ENCODE measurements at regions of chr1 and their contacts with region 1.

Region 1: DNA sequence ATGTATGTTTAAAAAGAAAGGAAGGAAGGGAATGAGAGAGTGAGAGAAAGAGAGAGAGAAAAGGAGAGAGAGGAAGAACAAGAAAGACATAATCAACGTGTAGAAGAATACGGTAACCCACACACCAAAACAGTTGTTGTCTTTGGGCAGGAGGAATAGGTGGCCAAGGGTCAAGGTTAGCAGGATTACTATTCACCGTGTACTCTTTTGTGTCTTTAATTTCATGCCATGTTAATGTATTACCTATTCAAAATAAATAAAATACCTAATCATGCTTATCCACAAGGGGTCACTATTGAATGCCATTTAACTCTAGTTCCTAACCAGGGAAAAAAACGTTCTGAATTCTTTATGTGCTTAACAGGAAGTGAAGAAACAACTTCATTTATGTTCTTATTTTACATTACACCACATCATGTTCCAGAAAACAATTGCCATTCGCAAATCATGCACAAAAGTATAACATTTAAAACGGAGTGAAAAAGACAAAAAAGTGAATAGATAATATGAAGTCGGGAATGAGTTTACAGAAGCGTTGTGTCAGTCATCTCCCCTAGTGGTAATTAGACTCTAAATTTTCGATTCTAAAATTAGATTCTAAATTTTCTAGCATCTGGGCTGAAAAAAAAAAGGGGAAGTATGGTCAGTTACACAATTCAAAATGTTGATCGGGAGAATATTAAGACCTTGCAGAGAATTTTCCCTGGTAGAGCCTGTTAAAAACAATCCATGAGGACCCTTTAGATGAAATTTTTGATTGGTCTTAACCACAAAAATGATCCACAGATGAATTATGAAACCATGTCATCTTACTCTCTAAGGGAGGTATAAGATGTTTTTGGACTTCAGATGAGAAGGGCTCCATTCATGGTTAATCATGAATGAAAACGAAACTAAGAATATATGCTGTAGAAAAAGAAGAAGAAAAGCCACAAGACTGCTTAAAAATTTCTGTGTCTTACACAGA is 700 bp upstream of the KMO start:
- DNase-seq: peak; percentile 77 to 92 (median 83)
- H3K4me3 ChIP-seq: peak overlapping the region; percentile 65 to 100 (median 87)
- H3K4me3 Mint-ChIP-seq: peak overlapping the region; percentile 64 to 97
- H3K27ac ChIP-seq: peak overlapping the region; percentile 74 to 98
- H3K27ac Mint-ChIP-seq: peak overlapping the region; percentile 90 to 98 (median 95)
- H3K4me1 ChIP-seq: peaks cover 24 to 28% of the 10 kb centered on the region in 2 donors
- H3K4me1 Mint-ChIP-seq: peaks cover 29% of the 10 kb centered on the region
- H3K27me3 ChIP-seq: no peaks in the 10 kb centered on the region
- H3K27me3 Mint-ChIP-seq: peaks cover 0 to 2% (median 2%) of the 10 kb centered on the region in 3 donors
- CTCF ChIP-seq: peak; percentile 85

Region 2: DNA sequence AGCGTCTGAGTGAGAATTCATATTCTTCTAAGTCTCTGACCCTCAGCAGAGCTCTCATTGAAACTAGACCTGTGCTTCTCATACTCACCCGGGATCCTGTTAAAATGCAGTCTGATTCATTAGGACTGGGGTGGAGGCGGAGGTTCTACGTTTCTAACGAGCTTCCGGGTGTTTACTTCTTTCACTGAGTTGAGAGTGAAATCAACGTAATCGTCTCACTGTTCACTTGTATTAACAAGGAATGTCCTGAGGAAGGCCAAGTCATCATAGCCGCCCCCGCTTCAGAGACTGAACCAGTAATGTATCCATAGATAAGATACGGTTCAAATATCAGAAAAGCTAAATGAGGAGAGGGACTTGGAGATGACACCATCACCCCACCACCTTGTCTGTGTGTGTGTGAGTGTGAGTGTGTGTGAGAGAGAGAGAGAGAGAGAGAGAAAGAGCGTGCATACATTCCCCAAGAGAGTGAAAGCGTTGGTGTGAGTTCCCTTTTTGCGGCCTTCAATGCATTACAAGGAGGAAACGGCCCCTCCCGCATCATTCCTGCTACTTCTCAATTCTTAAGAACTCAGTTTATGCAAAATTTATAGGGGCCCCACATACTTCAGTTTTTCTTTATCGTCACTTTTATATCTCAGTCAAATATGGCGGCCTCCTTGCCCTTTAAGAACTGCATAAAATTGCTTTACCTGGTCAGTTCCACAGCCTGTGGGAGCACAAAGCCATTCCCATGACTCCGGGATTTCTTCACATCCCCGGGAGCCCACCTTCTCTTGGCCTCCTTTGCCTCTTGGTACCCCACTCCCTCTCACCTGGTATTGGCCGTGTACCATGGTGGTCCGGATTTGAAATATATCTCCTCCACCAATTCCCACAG is 20.5 kb after region 1 on chr1:
- intact Hi-C with region 1: loop called (anchors 2 kb)
- DNase-seq: peak; percentile 93 to 96 (median 95)
- H3K4me3 ChIP-seq: peak overlapping the region; percentile 55 to 90 (median 76)
- H3K4me3 Mint-ChIP-seq: peak overlapping the region; percentile 84 to 94
- H3K27ac ChIP-seq: peak overlapping the region; percentile 80 to 100
- H3K27ac Mint-ChIP-seq: peak overlapping the region; percentile 98 to 100 (median 100)
- H3K4me1 ChIP-seq: peaks cover 38 to 39% of the 10 kb centered on the region in 2 donors
- H3K4me1 Mint-ChIP-seq: peaks cover 42% of the 10 kb centered on the region
- H3K27me3 ChIP-seq: no peaks in the 10 kb centered on the region
- H3K27me3 Mint-ChIP-seq: peaks cover 0 to 2% (median 0%) of the 10 kb centered on the region in 3 donors
- CTCF ChIP-seq: no peak

Region 3: GRCh38 chr1:241592273-241592958 is 60.9 kb after region 1 on chr1:
- intact Hi-C with region 1: loop called in 1 of 2 experiments (anchors 5 kb)
- DNase-seq: peak; percentile 64 to 87 (median 71)
- H3K4me3 ChIP-seq: no peak overlapping the region
- H3K4me3 Mint-ChIP-seq: no peak overlapping the region
- H3K27ac ChIP-seq: peak overlapping the region; percentile 30 to 68
- H3K27ac Mint-ChIP-seq: peak overlapping the region; percentile 67 to 94 (median 85)
- H3K4me1 ChIP-seq: peaks cover 34 to 36% of the 10 kb centered on the region in 2 donors
- H3K4me1 Mint-ChIP-seq: peaks cover 41% of the 10 kb centered on the region
- H3K27me3 ChIP-seq: no peaks in the 10 kb centered on the region
- H3K27me3 Mint-ChIP-seq: no peaks in the 10 kb centered on the region
- CTCF ChIP-seq: no peak

Region 4: GRCh38 chr1:241611063-241611462 is 79.6 kb after region 1 on chr1:
- intact Hi-C with region 1: loop called in 1 of 2 experiments (anchors 5 kb)
- DNase-seq: peak; percentile 43 to 74 (median 66)
- H3K4me3 ChIP-seq: no peak overlapping the region
- H3K4me3 Mint-ChIP-seq: no peak overlapping the region
- H3K27ac ChIP-seq: peak overlapping the region in 1 of 2 donors; percentile 60
- H3K27ac Mint-ChIP-seq: no peak overlapping the region
- H3K4me1 ChIP-seq: peaks cover 11 to 20% of the 10 kb centered on the region in 2 donors
- H3K4me1 Mint-ChIP-seq: peaks cover 14% of the 10 kb centered on the region
- H3K27me3 ChIP-seq: no peaks in the 10 kb centered on the region
- H3K27me3 Mint-ChIP-seq: peaks cover 0 to 3% (median 0%) of the 10 kb centered on the region in 3 donors
- CTCF ChIP-seq: peak; percentile 80

Region 5: DNA sequence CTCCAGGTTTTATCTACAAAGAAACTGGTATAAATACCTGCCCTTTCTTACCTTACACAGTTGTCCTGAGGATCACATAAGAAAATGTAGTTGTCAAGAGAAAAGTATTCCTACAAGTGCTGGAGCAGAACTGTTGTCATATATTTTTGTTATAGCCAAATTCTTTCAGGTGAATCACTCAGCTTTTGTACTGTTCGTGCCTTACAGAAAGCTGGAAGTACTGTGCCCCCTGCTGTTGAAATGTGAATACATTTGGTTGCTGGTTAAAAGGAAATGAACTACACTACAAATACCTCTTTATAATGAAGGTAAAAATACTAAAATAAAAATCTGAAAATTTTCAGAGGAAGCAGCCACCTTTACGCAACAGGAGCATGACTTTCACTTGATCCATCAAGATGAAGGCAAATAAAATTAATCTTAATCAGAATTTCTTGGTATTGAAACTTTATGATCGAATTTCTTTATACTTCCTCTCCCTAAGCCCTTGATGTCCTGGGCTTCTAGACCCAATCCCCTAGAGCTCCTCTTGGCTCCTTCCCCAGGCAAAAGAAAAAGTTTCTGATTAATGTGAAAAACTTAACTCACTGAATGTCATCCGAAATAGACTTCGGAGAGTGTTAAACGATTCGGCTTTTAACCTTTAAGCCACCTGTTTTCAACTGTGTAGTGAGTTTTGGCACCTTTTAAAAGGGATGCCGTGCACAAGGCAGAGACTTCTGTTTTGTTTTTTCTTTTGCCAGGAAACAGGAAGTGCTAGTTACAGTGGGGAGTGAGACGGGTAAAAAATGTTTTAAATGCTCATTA is 96.2 kb after region 1 on chr1:
- intact Hi-C with region 1: loop called (anchors 5 kb)
- DNase-seq: peak; percentile 61 to 77 (median 66)
- H3K4me3 ChIP-seq: peak overlapping the region in 2 of 3 experiments; percentile 25 to 47
- H3K4me3 Mint-ChIP-seq: peak overlapping the region; percentile 67 to 81
- H3K27ac ChIP-seq: peak overlapping the region; percentile 33 to 61
- H3K27ac Mint-ChIP-seq: peak overlapping the region; percentile 54 to 89 (median 72)
- H3K4me1 ChIP-seq: peaks cover 9 to 12% of the 10 kb centered on the region in 2 donors
- H3K4me1 Mint-ChIP-seq: peaks cover 12% of the 10 kb centered on the region
- H3K27me3 ChIP-seq: no peaks in the 10 kb centered on the region
- H3K27me3 Mint-ChIP-seq: peaks cover 0 to 2% (median 0%) of the 10 kb centered on the region in 3 donors
- CTCF ChIP-seq: peak; percentile 76

Region 6: GRCh38 chr1:241640029-241640818 is 108.7 kb after region 1 on chr1 and contains the starts of genes CHML and OPN3:
- intact Hi-C with region 1: loop called in 1 of 2 experiments (anchors 5 kb)
- DNase-seq: peak; percentile 86 to 90 (median 89)
- H3K4me3 ChIP-seq: peak within 1 kb of the TSS; percentile 81 to 92 (median 88)
- H3K4me3 Mint-ChIP-seq: peak within 1 kb of the TSS; percentile 84 to 92
- H3K27ac ChIP-seq: peak within 1 kb of the TSS; percentile 74 to 90
- H3K27ac Mint-ChIP-seq: peak within 1 kb of the TSS; percentile 81 to 96 (median 87)
- H3K4me1 ChIP-seq: peaks cover 34 to 49% of the 10 kb centered on the region in 2 donors
- H3K4me1 Mint-ChIP-seq: peaks cover 42% of the 10 kb centered on the region
- H3K27me3 ChIP-seq: no peaks in the 10 kb centered on the region
- H3K27me3 Mint-ChIP-seq: peaks cover 0 to 2% (median 2%) of the 10 kb centered on the region in 3 donors
- CTCF ChIP-seq: no peak
- polyA plus RNA-seq, gene CHML: 3.4 to 6.6 (median 3.4) TPM
- polyA plus RNA-seq, gene OPN3: 14.5 to 56.1 (median 55.2) TPM

Region 7: DNA sequence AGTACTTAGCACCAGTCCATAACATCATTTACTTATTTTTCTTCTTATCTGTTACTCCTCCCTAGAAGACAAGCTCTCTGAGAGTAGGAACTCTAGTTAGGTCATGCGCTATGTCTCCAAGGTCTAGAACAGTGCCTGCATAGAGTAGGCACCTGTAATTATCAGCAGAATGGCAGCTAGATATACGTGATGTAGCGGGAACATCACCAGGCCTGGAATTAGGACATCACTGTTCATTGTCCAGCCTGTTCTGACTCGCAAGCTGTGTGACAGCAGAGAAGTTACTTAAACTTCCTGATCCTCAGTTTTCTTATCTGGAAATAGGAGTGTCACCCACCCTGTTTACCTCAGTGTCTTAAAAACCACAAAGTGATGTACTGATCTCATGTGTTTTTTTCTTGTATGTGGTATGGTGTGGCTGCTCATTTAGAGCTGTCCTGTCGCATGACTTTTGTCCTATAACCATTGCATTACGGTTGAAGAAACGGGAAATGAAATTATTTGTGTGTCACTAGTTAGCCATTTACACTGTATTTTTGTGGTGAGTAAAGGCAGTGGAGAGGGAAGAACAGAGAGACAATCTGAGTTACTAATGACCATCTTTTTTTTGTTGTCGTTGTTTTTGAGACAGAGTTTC is 279.4 kb after region 1 on chr1:
- intact Hi-C with region 1: loop called in 1 of 2 experiments (anchors 10 kb)
- DNase-seq: peak; percentile 60 to 74 (median 64)
- H3K4me3 ChIP-seq: no peak overlapping the region
- H3K4me3 Mint-ChIP-seq: no peak overlapping the region
- H3K27ac ChIP-seq: peak overlapping the region; percentile 67 to 80
- H3K27ac Mint-ChIP-seq: peak overlapping the region; percentile 77 to 95 (median 91)
- H3K4me1 ChIP-seq: peaks cover 43 to 64% of the 10 kb centered on the region in 2 donors
- H3K4me1 Mint-ChIP-seq: peaks cover 55% of the 10 kb centered on the region
- H3K27me3 ChIP-seq: no peaks in the 10 kb centered on the region
- H3K27me3 Mint-ChIP-seq: no peaks in the 10 kb centered on the region
- CTCF ChIP-seq: no peak